CD8-positive, alpha-beta T cell (primary cell): ENCODE measurements at regions of chr12 and their contacts with region 1.

Region 1: DNA sequence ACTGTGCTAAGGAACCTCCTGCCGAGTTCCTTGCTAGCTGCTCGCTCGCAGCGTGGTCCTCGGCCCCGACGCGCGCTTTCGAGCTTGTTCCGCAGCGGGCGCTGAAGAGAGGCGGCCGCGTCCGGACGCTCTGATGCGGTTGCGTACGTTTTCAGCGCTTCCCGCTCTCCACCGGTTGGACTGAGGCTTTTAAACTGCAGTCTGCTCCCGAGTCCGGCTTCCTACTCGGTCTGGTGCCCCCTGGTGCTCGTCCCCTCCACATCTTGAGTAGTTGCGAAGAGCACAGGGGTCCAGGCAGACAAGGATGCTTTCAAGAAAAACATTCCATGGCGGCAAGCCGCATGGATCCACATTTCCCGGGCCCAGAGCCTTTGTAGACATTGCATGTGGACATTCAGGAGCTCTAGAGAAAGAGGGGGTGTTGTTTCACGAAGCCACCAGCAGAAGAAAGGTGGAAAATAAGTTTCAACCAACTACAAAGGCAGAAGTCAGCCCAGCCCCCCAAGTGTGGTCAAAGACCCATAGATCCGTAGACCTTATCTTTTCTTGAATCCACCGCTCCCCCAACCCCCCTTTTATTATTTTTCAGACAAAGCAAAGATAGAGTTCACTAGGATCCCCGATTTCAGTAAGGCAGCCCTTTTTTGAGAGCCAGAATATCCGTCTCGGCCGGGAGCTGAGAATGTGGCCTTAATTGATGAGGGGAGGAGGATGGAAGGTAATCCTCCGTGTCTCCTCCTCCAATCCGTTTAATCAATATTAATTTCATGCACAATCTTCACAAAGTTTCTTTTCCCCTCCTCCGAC is 984 bp upstream of the WNK1 start:
- DNase-seq: peak; percentile 61 to 95 (median 82)
- ATAC-seq: peak; percentile 21
- H3K4me3 ChIP-seq: peak overlapping the region; percentile 58 to 88
- H3K4me3 Mint-ChIP-seq: no peak overlapping the region
- H3K27ac ChIP-seq: peak overlapping the region; percentile 68 to 76
- H3K27ac Mint-ChIP-seq: no peak overlapping the region
- H3K4me1 ChIP-seq: peaks cover 25% of the 10 kb centered on the region
- H3K4me1 Mint-ChIP-seq: peaks cover 20% of the 10 kb centered on the region
- H3K27me3 ChIP-seq: no peaks in the 10 kb centered on the region
- H3K27me3 Mint-ChIP-seq: no peaks in the 10 kb centered on the region
- CTCF ChIP-seq: peak; percentile 48

Region 2: GRCh38 chr12:569803-570434 is 181.5 kb before region 1 on chr12:
- CTCF ChIA-PET with region 1: interaction called, 43 read pairs
- POLR2A ChIA-PET with region 1: interaction called, 27 read pairs
- intact Hi-C with region 1: loop called (anchors 2 kb)
- DNase-seq: peak; percentile 74 to 93 (median 87)
- ATAC-seq: peak; percentile 98
- H3K4me3 ChIP-seq: peak overlapping the region; percentile 63 to 76
- H3K4me3 Mint-ChIP-seq: peak overlapping the region; percentile 86
- H3K27ac ChIP-seq: peak overlapping the region in 1 of 2 experiments; percentile 8
- H3K27ac Mint-ChIP-seq: peak overlapping the region; percentile 77
- H3K4me1 ChIP-seq: peaks cover 43% of the 10 kb centered on the region
- H3K4me1 Mint-ChIP-seq: peaks cover 45% of the 10 kb centered on the region
- H3K27me3 ChIP-seq: no peaks in the 10 kb centered on the region
- H3K27me3 Mint-ChIP-seq: no peaks in the 10 kb centered on the region
- CTCF ChIP-seq: peak; percentile 88

Region 3: GRCh38 chr12:630656-631632 is 120.5 kb before region 1 on chr12:
- CTCF ChIA-PET with region 1: interaction called, 13 read pairs
- POLR2A ChIA-PET with region 1: interaction called, 11 read pairs
- intact Hi-C with region 1: no loop called
- DNase-seq: peak in 8 of 9 experiments; percentile 19 to 83 (median 64)
- ATAC-seq: peak; percentile 93
- H3K4me3 ChIP-seq: peak overlapping the region in 1 of 2 experiments; percentile 54
- H3K4me3 Mint-ChIP-seq: peak overlapping the region; percentile 78
- H3K27ac ChIP-seq: peak overlapping the region in 1 of 2 experiments; percentile 53
- H3K27ac Mint-ChIP-seq: peak overlapping the region; percentile 93
- H3K4me1 ChIP-seq: no peaks in the 10 kb centered on the region
- H3K4me1 Mint-ChIP-seq: peaks cover 14% of the 10 kb centered on the region
- H3K27me3 ChIP-seq: no peaks in the 10 kb centered on the region
- H3K27me3 Mint-ChIP-seq: no peaks in the 10 kb centered on the region
- CTCF ChIP-seq: no peak

Region 4: GRCh38 chr12:674272-674781 is 77.1 kb before region 1 on chr12:
- CTCF ChIA-PET with region 1: interaction called, 26 read pairs
- POLR2A ChIA-PET with region 1: interaction called, 17 read pairs
- intact Hi-C with region 1: loop called in 1 of 2 experiments (anchors 1 kb)
- DNase-seq: peak; percentile 21 to 92 (median 66)
- ATAC-seq: peak; percentile 93
- H3K4me3 ChIP-seq: no peak overlapping the region
- H3K4me3 Mint-ChIP-seq: peak overlapping the region; percentile 76
- H3K27ac ChIP-seq: peak overlapping the region; percentile 5 to 92
- H3K27ac Mint-ChIP-seq: peak overlapping the region; percentile 90
- H3K4me1 ChIP-seq: peaks cover 36% of the 10 kb centered on the region
- H3K4me1 Mint-ChIP-seq: peaks cover 52% of the 10 kb centered on the region
- H3K27me3 ChIP-seq: no peaks in the 10 kb centered on the region
- H3K27me3 Mint-ChIP-seq: no peaks in the 10 kb centered on the region
- CTCF ChIP-seq: no peak

Region 5: DNA sequence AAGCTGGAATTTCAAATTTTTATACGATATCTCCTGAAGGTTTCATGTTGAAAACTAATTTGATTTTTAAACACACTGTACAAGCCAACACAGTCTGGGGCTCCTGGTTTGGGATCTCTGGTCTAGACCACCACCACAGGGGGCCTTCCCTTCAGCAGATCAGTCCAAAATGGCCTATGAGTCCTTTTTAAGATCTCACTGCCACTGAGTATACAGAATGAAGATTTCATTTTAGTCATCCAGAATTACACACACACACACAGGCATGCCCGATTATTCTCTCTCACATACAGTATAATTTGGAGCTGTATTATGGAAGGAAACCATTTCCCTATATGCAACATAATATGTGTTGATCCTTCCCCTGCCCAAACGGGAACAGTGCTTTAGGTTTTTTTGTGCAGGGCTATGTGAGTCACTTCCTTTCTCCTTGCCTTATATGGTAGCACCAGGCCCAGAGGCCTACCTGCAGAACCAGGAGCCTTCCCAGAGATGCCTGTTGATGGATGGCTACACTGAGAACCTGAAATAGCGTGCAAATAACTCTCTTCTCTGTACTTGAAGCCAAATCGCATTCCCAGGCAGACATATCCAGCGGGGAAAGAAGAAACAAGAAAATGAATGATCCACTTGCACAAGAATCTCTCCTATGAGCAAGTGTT is 27.1 kb before region 1 on chr12:
- CTCF ChIA-PET with region 1: interaction called, 44 read pairs
- POLR2A ChIA-PET with region 1: interaction called, 58 read pairs
- intact Hi-C with region 1: loop called (anchors 2 kb)
- DNase-seq: peak in 5 of 9 experiments; percentile 17 to 59 (median 30)
- ATAC-seq: peak; percentile 66
- H3K4me3 ChIP-seq: no peak overlapping the region
- H3K4me3 Mint-ChIP-seq: peak overlapping the region; percentile 6
- H3K27ac ChIP-seq: peak overlapping the region in 1 of 2 experiments; percentile 6
- H3K27ac Mint-ChIP-seq: peak overlapping the region; percentile 83
- H3K4me1 ChIP-seq: peaks cover 58% of the 10 kb centered on the region
- H3K4me1 Mint-ChIP-seq: peaks cover 75% of the 10 kb centered on the region
- H3K27me3 ChIP-seq: no peaks in the 10 kb centered on the region
- H3K27me3 Mint-ChIP-seq: no peaks in the 10 kb centered on the region
- CTCF ChIP-seq: no peak

Region 6: GRCh38 chr12:810671-811415 is 59.4 kb after region 1 on chr12:
- CTCF ChIA-PET with region 1: interaction called, 61 read pairs
- POLR2A ChIA-PET with region 1: interaction called, 7 read pairs
- intact Hi-C with region 1: loop called (anchors 1 to 2 kb)
- DNase-seq: no peak
- ATAC-seq: peak; percentile 17
- H3K4me3 ChIP-seq: no peak overlapping the region
- H3K4me3 Mint-ChIP-seq: peak overlapping the region; percentile 33
- H3K27ac ChIP-seq: peak overlapping the region in 1 of 2 experiments; percentile 26
- H3K27ac Mint-ChIP-seq: peak overlapping the region; percentile 73
- H3K4me1 ChIP-seq: peaks cover 45% of the 10 kb centered on the region
- H3K4me1 Mint-ChIP-seq: peaks cover 68% of the 10 kb centered on the region
- H3K27me3 ChIP-seq: no peaks in the 10 kb centered on the region
- H3K27me3 Mint-ChIP-seq: no peaks in the 10 kb centered on the region
- CTCF ChIP-seq: no peak

Region 7: GRCh38 chr12:1594261-1595025 is 843.0 kb after region 1 on chr12 and contains the start of gene FBXL14:
- CTCF ChIA-PET with region 1: no interaction called
- POLR2A ChIA-PET with region 1: no interaction called
- intact Hi-C with region 1: loop called (anchors 5 to 10 kb)
- DNase-seq: peak; percentile 84 to 96 (median 92)
- ATAC-seq: peak; percentile 59
- H3K4me3 ChIP-seq: peak within 1 kb of the TSS; percentile 68 to 83
- H3K4me3 Mint-ChIP-seq: peak within 1 kb of the TSS; percentile 92
- H3K27ac ChIP-seq: peak within 1 kb of the TSS; percentile 81 to 86
- H3K27ac Mint-ChIP-seq: peak within 1 kb of the TSS; percentile 92
- H3K4me1 ChIP-seq: peaks cover 37% of the 10 kb centered on the region
- H3K4me1 Mint-ChIP-seq: peaks cover 53% of the 10 kb centered on the region
- H3K27me3 ChIP-seq: no peaks in the 10 kb centered on the region
- H3K27me3 Mint-ChIP-seq: no peaks in the 10 kb centered on the region
- CTCF ChIP-seq: no peak
- total RNA-seq, gene FBXL14: 28.1 to 30.5 TPM